ENCODE measurements at regions of chr1 and their contacts with region 1.

Region 1: DNA sequence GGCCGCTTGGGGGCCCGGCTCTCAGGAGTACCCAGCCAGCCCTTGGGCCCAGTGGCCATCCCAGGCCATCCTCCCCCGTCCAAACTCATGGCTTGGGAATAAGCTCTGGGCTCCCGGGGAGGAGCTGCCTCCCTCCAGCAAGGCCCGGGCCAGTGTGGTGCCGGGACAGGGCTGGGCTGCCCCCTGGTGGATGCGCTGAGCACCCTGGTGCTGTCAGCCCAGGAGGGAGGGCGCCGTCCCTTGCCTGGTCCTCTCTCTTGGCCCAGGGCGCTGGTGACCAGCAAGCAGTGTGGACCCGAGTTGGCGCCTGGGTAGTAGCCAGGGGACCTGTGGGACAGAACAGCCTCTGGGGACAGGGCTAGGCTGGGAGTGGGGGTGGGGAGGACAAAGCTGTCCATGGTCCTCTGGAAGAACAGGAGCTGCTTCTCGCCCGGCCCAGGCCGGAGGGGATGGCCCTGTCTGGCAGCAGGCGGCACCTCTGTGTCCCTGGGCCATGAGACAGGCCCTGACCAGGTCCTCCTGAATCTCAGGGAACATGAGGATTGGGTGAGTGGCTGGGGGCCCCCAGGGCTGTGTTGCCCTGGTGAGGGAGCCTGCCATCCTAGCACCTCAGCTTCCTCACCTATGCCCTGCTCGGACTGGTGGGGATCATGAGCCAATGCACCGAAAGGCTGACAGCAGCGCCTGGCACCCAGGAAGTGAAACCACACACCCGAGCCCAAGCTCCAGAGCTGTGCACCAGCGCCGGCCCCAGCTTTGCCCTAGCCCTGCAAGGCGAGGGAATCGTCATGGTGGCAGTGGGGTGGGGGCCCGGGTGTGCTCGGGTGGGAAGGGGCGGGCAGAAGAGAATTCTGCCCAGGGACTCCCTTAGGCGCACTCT is 9.4 kb downstream of the MORN1 start:
- DNase-seq: peak; percentile 59 to 87 (median 78)
- ATAC-seq: peak; percentile 97
- H3K4me3 ChIP-seq: no peak overlapping the region
- H3K4me3 Mint-ChIP-seq: no peak overlapping the region
- H3K27ac ChIP-seq: no peak overlapping the region
- H3K27ac Mint-ChIP-seq: no peak overlapping the region
- H3K4me1 ChIP-seq: peaks cover 15% of the 10 kb centered on the region
- H3K4me1 Mint-ChIP-seq: peaks cover 3% of the 10 kb centered on the region
- H3K27me3 ChIP-seq: no peaks in the 10 kb centered on the region
- H3K27me3 Mint-ChIP-seq: no peaks in the 10 kb centered on the region
- CTCF ChIP-seq: peak; percentile 71

Region 2: DNA sequence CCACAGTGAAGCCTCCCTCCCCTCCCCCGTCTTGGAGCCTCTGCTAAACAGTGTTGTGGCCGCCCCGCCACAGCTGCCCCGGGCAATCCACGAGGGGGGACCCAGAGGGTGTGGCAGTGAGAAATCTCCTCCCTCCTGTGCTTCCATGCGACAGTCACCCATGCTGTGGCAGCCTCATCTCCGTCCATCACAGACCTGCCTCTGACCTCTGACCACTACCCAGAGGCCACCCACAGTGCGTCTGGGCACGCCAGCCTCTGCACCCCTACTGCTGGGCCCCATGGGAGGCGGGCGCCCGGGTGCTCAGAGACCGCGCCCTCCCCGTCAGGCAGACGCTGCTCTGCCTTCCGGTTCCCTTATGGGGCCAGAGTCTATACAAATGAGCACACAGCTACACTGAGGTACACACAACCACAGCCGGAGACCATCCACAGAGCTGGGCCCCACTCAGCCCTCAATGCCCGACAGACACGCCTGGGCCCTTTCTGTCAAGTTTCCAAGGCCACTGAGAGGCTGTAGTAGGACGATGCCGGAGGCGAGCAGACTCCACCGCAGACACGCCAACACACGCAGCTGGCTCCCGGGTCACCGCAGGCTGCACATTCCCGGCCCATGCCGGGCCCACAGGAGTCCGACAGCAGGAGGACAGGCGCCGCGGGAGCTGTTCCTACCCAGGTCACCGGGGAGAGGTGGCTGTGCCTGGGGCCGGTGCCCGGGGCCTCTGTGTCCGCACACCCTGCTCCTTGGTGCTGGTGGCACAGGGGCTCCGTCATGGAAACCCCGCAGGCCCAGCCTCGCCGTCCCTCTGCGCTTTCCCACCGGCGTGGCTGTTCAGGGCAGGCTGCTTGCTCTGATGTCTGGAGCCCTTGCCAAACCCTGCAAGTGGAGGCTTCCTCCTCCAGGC is 439.0 kb before region 1 on chr1:
- CTCF ChIA-PET with region 1: no interaction called
- POLR2A ChIA-PET with region 1: no interaction called
- intact Hi-C with region 1: no loop called
- DNase-seq: no peak
- ATAC-seq: no peak
- H3K4me3 ChIP-seq: no peak overlapping the region
- H3K4me3 Mint-ChIP-seq: no peak overlapping the region
- H3K27ac ChIP-seq: no peak overlapping the region
- H3K27ac Mint-ChIP-seq: no peak overlapping the region
- H3K4me1 ChIP-seq: peaks cover 5% of the 10 kb centered on the region
- H3K4me1 Mint-ChIP-seq: peaks cover 3% of the 10 kb centered on the region
- H3K27me3 ChIP-seq: no peaks in the 10 kb centered on the region
- H3K27me3 Mint-ChIP-seq: no peaks in the 10 kb centered on the region
- CTCF ChIP-seq: no peak

Region 3: GRCh38 chr1:2091611-2092604 is 290.1 kb before region 1 on chr1:
- CTCF ChIA-PET with region 1: no interaction called
- POLR2A ChIA-PET with region 1: no interaction called
- intact Hi-C with region 1: loop called (anchors 1 to 5 kb)
- DNase-seq: peak in 8 of 9 experiments; percentile 9 to 66 (median 48)
- ATAC-seq: peak; percentile 40
- H3K4me3 ChIP-seq: no peak overlapping the region
- H3K4me3 Mint-ChIP-seq: no peak overlapping the region
- H3K27ac ChIP-seq: no peak overlapping the region
- H3K27ac Mint-ChIP-seq: no peak overlapping the region
- H3K4me1 ChIP-seq: no peaks in the 10 kb centered on the region
- H3K4me1 Mint-ChIP-seq: peaks cover 4% of the 10 kb centered on the region
- H3K27me3 ChIP-seq: no peaks in the 10 kb centered on the region
- H3K27me3 Mint-ChIP-seq: no peaks in the 10 kb centered on the region
- CTCF ChIP-seq: peak; percentile 66

Region 4: DNA sequence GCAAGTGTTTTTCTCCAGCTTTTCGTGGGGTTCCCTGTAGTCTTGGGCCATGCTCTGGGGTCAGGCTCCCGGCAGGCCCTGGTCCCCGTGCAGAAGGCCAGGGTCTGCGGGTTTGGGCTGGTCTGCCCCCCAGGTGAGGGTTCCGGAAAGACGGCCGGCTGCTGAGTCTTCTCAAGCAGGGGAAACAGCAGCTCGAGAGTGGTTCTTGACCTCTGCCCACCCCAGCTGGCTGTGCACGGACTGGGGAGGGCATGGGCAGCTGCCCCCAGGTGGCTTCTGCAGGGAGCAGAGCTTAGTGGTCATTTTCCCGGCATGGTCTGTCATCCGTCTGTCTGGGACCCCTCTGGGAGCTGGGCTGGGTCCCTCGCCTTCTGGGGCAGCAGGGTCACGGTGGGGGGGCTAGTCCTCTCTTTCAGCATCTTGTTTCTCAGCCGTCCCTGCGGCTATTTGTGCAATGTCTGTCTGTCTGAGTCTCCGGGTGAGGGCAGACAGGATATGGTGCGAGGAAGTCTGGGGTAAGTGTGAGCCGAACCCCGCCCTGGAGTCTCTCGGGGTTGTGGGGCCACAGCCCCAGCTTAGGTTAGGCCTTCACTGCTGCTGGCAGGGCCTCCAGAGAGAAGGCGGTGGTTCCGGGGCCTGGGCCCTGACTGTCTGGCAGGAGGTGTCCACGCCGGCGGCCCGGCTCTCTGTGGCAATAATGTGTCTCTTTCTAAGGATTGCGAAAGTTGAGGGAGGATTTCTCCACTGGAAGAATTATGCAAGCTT is 147.8 kb before region 1 on chr1:
- CTCF ChIA-PET with region 1: interaction called, 11 read pairs
- POLR2A ChIA-PET with region 1: interaction called, 3 read pairs
- intact Hi-C with region 1: no loop called
- DNase-seq: peak; percentile 62 to 94 (median 83)
- ATAC-seq: peak; percentile 55
- H3K4me3 ChIP-seq: peak overlapping the region; percentile 25 to 82
- H3K4me3 Mint-ChIP-seq: peak overlapping the region; percentile 98
- H3K27ac ChIP-seq: peak overlapping the region; percentile 54 to 80
- H3K27ac Mint-ChIP-seq: peak overlapping the region; percentile 98
- H3K4me1 ChIP-seq: peaks cover 83% of the 10 kb centered on the region
- H3K4me1 Mint-ChIP-seq: peaks cover 71% of the 10 kb centered on the region
- H3K27me3 ChIP-seq: no peaks in the 10 kb centered on the region
- H3K27me3 Mint-ChIP-seq: no peaks in the 10 kb centered on the region
- CTCF ChIP-seq: no peak

Region 5: DNA sequence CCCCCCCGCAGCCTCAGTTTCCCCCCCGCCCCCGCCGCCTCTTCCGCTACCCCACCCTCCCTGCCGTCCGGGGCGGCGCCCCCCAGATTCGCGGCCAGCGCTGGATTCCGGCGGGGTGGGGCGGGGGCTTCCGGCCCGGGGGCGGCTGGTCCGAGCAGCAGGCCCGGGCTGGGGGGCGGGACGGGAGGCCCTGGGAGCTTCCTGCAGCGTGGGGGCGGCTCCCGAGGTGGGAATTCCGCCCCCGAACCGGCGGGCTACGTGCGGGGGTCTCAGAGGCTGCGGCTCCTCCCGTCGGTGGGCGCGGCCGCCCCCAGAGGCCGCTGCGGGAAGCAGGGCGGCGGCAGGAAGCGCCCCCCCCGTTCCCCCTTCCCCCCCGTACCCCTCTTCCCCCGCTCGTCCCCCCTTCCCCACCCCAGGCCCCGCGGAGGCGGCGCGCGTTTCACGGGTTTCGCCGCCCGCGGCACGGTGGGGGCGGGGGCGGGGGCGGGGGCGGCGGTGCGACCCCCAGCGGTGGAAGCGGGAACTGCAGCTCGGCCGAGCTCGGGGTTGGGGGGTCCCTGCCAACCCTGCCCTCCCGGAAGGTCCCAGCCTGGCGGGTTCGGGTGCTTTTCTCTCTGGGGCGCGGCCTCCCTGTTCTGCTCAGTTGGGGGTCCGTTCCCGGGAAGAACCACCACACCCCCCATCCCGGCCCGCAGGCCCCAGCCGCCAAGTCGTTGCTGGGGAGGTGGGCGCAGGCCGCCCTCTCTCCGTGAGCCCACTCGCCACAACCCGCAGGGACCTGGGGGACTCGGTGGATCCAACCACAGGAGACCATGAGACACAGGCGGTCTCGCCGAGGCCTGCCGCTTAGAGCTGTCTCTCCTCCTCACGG is 66.9 kb before region 1 on chr1:
- CTCF ChIA-PET with region 1: interaction called, 4 read pairs
- POLR2A ChIA-PET with region 1: no interaction called
- intact Hi-C with region 1: loop called in 1 of 2 experiments (anchors 5 kb)
- DNase-seq: peak; percentile 52 to 89 (median 73)
- ATAC-seq: peak; percentile 50
- H3K4me3 ChIP-seq: peak overlapping the region; percentile 52 to 58
- H3K4me3 Mint-ChIP-seq: peak overlapping the region; percentile 64
- H3K27ac ChIP-seq: peak overlapping the region; percentile 70 to 82
- H3K27ac Mint-ChIP-seq: peak overlapping the region; percentile 79
- H3K4me1 ChIP-seq: peaks cover 76% of the 10 kb centered on the region
- H3K4me1 Mint-ChIP-seq: peaks cover 33% of the 10 kb centered on the region
- H3K27me3 ChIP-seq: no peaks in the 10 kb centered on the region
- H3K27me3 Mint-ChIP-seq: no peaks in the 10 kb centered on the region
- CTCF ChIP-seq: peak; percentile 97

Measured in CD8-positive, alpha-beta T cell (primary cell).